SK-N-SH (cell line): ENCODE measurements at regions of chr2 and their contacts with region 1.

Region 1: DNA sequence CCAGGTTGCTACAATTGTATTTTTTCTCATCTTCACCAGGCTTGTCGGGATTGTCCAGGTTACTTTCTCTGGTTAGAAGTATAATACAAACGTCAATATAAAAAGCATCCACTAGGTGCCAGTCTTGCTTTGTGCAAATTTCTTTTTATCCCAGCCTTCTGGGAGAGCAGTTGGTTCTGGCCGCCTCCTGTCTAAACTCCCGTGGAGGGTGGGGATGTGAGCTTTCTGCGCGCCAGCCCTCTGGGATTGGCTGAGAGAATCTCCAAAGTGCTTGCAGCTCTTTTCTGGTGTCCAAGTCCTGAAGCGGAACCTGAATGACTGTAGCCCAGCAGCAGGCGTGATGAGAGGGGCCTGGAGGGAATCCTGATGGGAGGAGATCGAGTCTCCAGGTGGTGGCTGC is 22.4 kb upstream of the TOGARAM2 start:
- DNase-seq: peak; percentile 87
- H3K4me3 ChIP-seq: no peak overlapping the region; a peak in 1 of 4 replicates
- H3K27ac ChIP-seq: peak overlapping the region in 1 of 2 experiments; percentile 26; a peak in 1 of 4 replicates
- H3K4me1 ChIP-seq: peaks cover 0 to 10% of the 10 kb centered on the region in 2 experiments; a peak in 1 of 4 replicates
- H3K27me3 ChIP-seq: no peaks in the 10 kb centered on the region
- CTCF ChIP-seq: peak; percentile 79
- EP300 ChIP-seq: 0 out of 4 replicates have a peak, but pooled peaks of 1 of the 2 experiments have one; percentile 18
- RAD21 ChIP-seq: peak; percentile 99

Region 2: DNA sequence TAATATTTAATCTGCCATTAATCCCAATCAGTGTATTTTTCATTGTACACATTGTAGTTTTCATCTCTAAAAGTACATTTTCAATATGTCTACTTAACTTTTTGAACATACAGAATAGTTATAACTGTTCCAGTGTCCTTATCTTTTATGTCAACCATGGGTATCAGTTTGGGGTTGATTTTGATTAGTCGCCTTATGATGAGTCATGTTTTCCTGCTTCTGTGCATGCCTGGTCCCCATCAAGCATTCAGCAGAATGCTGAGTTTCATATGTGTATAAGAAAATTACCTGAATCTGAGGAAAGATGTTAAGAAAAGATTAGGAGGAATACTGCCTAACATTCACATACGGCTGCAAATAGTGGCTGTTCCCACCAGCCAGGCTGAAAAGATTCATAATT is 130.3 kb before region 1 on chr2:
- CTCF ChIA-PET with region 1: no interaction called
- POLR2A ChIA-PET with region 1: no interaction called
- DNase-seq: no peak
- H3K4me3 ChIP-seq: no peak overlapping the region
- H3K27ac ChIP-seq: no peak overlapping the region
- H3K4me1 ChIP-seq: no peaks in the 10 kb centered on the region
- H3K27me3 ChIP-seq: no peaks in the 10 kb centered on the region
- CTCF ChIP-seq: no peak
- EP300 ChIP-seq: no peak
- RAD21 ChIP-seq: no peak

Region 3: DNA sequence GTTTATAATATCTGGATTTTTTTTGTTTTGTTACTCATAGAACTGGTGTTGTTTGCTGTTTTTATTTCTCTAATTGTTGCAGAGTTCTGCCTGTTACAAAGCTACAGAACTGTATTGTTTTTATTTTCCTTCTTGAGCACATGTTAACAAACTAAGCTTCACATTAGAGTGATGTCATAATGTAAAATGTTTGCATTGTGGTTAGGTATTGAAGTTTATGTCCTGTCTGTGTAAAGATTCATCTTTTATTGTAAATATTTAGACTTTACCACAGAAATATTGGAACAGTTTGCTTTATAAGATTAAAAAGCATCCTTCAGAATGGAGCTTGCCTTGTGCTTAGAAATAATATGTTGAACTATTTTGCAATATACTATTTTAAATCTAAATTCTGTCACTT is 224.2 kb after region 1 on chr2:
- CTCF ChIA-PET with region 1: interaction called, 10 read pairs
- POLR2A ChIA-PET with region 1: no interaction called
- DNase-seq: no peak
- H3K4me3 ChIP-seq: no peak overlapping the region
- H3K27ac ChIP-seq: no peak overlapping the region
- H3K4me1 ChIP-seq: peaks cover 0 to 3% of the 10 kb centered on the region in 2 experiments; a peak in 2 of 4 replicates
- H3K27me3 ChIP-seq: no peaks in the 10 kb centered on the region
- CTCF ChIP-seq: no peak
- EP300 ChIP-seq: no peak
- RAD21 ChIP-seq: no peak

Region 4: DNA sequence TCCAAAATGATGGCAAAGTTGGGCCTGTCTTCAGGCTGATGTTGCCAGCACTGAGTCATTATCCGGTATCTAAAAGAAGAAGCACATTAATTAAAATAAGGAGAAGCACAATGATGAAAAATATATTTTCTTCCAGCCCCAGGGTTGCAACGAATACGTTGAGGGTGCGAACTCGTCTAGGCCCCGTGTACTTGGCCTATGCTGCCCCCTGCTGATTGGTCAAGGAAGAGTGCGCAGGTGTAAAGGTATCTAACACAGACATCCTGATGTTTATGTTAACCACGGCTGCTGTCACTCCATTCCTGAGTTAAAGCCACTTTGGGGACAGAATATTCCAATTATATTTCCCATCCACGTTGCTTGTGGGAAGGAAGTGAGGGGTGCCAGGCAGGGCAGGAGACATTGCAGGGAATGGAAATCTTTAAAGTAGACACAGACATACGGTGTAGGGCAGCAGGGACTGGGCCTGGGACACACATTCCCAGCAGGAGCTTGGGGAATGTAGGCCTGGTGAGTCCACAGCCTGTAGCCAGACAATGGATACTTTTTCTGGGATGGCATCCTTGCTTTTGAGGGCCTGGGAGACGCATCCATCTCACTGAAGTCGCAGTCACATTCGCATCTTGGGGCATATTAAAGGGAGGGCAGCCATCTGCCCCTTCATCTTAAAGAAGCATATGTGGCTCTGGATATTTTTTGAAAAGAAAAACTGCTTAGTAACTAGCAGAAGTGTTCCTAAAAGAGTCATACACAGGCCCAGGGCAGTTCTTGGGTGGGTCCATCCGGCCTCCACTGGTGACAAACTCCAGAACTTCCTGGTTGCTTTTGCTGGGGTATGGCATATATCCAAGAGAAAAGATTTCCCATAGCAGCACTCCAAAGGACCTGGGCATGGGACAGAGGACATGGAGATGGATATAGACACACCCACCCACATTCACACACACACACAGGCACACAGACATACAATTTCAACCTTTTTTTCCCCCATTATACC is 238.4 kb after region 1 on chr2:
- CTCF ChIA-PET with region 1: interaction called, 22 read pairs
- POLR2A ChIA-PET with region 1: no interaction called
- DNase-seq: peak; percentile 74
- H3K4me3 ChIP-seq: no peak overlapping the region; a peak in 1 of 4 replicates
- H3K27ac ChIP-seq: peak overlapping the region in 1 of 2 experiments; percentile 81; a peak in 2 of 4 replicates
- H3K4me1 ChIP-seq: peaks cover 0 to 15% of the 10 kb centered on the region in 2 experiments; a peak in 2 of 4 replicates
- H3K27me3 ChIP-seq: no peaks in the 10 kb centered on the region
- CTCF ChIP-seq: peak; percentile 98
- EP300 ChIP-seq: no peak
- RAD21 ChIP-seq: peak; percentile 95